CD4-positive, alpha-beta T cell (primary cell): ENCODE measurements at regions of chr18 and their contacts with region 1.

Region 1: DNA sequence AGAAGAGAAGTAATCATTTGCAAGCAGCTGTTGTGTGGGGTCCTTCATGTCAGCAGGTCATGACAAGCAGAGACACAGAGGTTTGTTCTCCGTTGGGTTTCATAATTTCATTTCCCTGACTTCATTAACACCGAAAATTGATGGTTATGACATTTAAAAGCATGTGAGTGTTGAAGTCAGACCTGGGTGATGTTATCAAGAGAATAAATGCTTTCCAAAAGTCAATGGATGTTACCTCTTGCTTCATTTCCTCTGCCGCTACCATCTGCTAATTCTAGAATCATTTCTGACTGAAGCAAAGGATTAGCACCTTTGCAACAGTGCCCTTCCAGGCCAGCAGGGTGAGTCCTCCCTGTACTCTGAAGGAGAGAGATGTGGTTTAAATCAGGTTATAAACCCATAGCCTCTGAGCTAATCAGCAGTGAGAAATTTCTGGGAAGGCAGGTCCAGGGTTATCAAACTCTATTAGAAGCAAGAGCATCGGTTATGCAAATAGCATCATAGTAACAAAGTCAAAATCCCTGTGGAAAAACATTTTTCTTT is 446.2 kb downstream of the PIK3C3 start:
- DNase-seq: no peak
- ATAC-seq: no peak
- H3K4me3 ChIP-seq: no peak overlapping the region
- H3K4me3 Mint-ChIP-seq: no peak overlapping the region
- H3K27ac ChIP-seq: no peak overlapping the region
- H3K27ac Mint-ChIP-seq: no peak overlapping the region
- H3K4me1 ChIP-seq: no peaks in the 10 kb centered on the region
- H3K4me1 Mint-ChIP-seq: no peaks in the 10 kb centered on the region
- H3K27me3 ChIP-seq: no peaks in the 10 kb centered on the region
- H3K27me3 Mint-ChIP-seq: no peaks in the 10 kb centered on the region
- CTCF ChIP-seq: no peak

Region 2: GRCh38 chr18:42459873-42460272 is 58.7 kb after region 1 on chr18:
- CTCF ChIA-PET with region 1: no interaction called
- POLR2A ChIA-PET with region 1: no interaction called
- intact Hi-C with region 1: loop called in 1 of 2 experiments (anchors 10 kb)
- DNase-seq: no peak
- ATAC-seq: no peak
- H3K4me3 ChIP-seq: no peak overlapping the region
- H3K4me3 Mint-ChIP-seq: no peak overlapping the region
- H3K27ac ChIP-seq: no peak overlapping the region
- H3K27ac Mint-ChIP-seq: no peak overlapping the region
- H3K4me1 ChIP-seq: no peaks in the 10 kb centered on the region
- H3K4me1 Mint-ChIP-seq: no peaks in the 10 kb centered on the region
- H3K27me3 ChIP-seq: no peaks in the 10 kb centered on the region
- H3K27me3 Mint-ChIP-seq: no peaks in the 10 kb centered on the region
- CTCF ChIP-seq: no peak